ENCODE measurements at regions of chr20 and their contacts with region 1.

Region 1: GRCh38 chr20:34579191-34579978 is 20.9 kb downstream of the MAP1LC3A start:
- DNase-seq: peak; percentile 94
- H3K4me3 ChIP-seq: no peak overlapping the region
- H3K27ac ChIP-seq: peak overlapping the region; percentile 10
- H3K4me1 ChIP-seq: peaks cover 30% of the 10 kb centered on the region
- H3K27me3 ChIP-seq: no peaks in the 10 kb centered on the region
- CTCF ChIP-seq: peak; percentile 92

Region 2: DNA sequence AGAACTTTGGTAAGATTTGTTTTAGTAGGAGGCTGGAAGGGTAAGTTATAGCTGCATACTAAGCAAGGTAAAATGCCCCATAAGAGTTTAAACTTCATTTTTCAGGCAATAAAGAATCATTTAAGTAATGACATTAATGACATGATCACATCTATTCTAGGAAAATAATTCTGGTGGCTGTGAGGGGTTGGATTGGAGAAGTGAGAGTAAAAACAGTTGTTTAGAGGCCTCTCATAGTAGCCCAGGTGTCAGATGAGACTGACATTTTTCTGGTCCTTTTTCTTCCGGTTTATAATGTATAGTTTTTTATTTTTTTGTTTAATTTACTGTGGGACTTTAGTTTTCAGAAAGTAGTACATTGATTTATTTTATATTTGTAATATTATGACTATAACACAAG is 175.5 kb before region 1 on chr20:
- CTCF ChIA-PET with region 1: no interaction called
- dilution Hi-C with region 1: no loop called
- in situ Hi-C with region 1: no loop called
- intact Hi-C with region 1: no loop called
- DNase-seq: no peak
- H3K4me3 ChIP-seq: no peak overlapping the region
- H3K27ac ChIP-seq: no peak overlapping the region
- H3K4me1 ChIP-seq: peaks cover 26% of the 10 kb centered on the region
- H3K27me3 ChIP-seq: no peaks in the 10 kb centered on the region
- CTCF ChIP-seq: no peak

Region 3: GRCh38 chr20:34676642-34677373 is 97.4 kb after region 1 on chr20 and contains the start of gene PIGU:
- CTCF ChIA-PET with region 1: no interaction called
- dilution Hi-C with region 1: no loop called
- in situ Hi-C with region 1: no loop called
- intact Hi-C with region 1: loop called (anchors 1 kb)
- DNase-seq: peak; percentile 96
- H3K4me3 ChIP-seq: peak within 1 kb of the TSS; percentile 88 to 96 (median 92)
- H3K27ac ChIP-seq: peak within 1 kb of the TSS; percentile 36
- H3K4me1 ChIP-seq: peaks cover 6% of the 10 kb centered on the region
- H3K27me3 ChIP-seq: no peaks in the 10 kb centered on the region
- CTCF ChIP-seq: peak in 1 of 2 donors; percentile 23
- total RNA-seq, gene PIGU: 10.5 to 15.2 TPM

Region 4: DNA sequence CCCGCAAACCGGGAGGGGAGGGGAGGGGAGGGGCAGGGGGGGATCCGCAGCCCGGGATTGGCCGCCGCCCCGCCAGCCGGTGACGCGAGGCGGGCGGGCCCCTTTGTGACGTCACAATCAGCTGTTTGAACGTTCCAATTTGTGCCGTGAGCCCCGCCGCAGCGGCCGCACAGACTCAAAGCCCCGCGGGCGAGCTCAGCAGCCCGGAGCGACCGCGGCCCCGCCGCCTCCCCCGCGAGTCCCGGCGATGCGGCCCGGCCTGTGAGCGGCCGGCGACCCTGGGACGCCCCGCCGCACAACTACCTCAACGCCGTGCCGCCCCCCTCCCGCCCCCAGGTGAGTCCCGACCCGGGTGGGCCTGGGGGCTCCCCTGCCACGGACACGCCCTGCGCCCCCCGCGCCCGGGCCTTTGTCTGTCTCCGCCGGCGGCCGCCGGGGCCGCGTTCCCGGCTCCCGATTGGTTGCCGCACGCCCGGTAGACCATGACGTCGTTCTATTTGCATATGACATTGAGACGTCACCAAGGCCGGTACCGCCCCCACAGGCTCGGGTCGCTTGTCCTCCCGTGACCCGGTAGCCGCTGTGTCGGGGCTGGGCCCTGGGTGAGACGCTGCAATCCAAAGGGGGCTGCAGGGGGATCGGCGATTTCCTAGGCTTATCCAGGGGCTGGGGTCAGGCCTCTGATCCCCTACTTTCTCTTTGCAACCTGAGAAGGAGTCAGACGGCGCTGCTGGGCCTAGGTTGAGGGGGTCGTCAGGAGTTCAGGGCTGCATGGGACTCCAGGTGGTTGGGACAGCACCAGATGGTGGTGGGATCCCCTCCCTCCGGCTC is 125.0 kb after region 1 on chr20 and contains the start of gene TP53INP2:
- CTCF ChIA-PET with region 1: interaction called, 4 read pairs
- dilution Hi-C with region 1: no loop called
- in situ Hi-C with region 1: loop called in 1 of 2 experiments (anchors 10 kb)
- intact Hi-C with region 1: loop called (anchors 1 kb)
- DNase-seq: peak; percentile 69
- H3K4me3 ChIP-seq: peak within 1 kb of the TSS; percentile 49 to 78 (median 61)
- H3K27ac ChIP-seq: peak within 1 kb of the TSS; percentile 52
- H3K4me1 ChIP-seq: peaks cover 35% of the 10 kb centered on the region
- H3K27me3 ChIP-seq: no peaks in the 10 kb centered on the region
- CTCF ChIP-seq: no peak
- total RNA-seq, gene TP53INP2: 2.5 to 4.4 TPM

Region 5: DNA sequence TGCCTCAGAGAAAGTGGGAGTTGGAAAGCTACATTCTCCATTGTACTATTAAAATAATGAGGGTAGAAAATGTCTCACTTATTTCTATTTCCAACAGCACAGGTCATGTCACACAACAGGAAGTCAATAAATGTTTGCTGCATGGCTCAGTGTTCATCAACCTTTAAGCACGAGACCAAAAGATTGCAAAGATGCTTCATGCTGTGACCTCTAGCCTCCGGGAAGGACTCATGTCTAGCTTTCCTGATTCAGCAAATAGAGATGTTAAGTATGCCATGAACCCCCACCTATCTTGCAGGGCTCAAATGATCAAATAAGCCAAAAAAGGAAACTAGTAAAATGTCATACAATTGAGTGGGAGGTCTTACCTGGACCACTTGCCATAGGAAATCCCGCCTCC is 188.7 kb after region 1 on chr20:
- CTCF ChIA-PET with region 1: interaction called, 8 read pairs
- dilution Hi-C with region 1: no loop called
- in situ Hi-C with region 1: loop called in 1 of 2 experiments (anchors 10 kb)
- intact Hi-C with region 1: loop called (anchors 1 kb)
- DNase-seq: no peak
- H3K4me3 ChIP-seq: no peak overlapping the region
- H3K27ac ChIP-seq: no peak overlapping the region
- H3K4me1 ChIP-seq: no peaks in the 10 kb centered on the region
- H3K27me3 ChIP-seq: no peaks in the 10 kb centered on the region
- CTCF ChIP-seq: no peak

Region 6: DNA sequence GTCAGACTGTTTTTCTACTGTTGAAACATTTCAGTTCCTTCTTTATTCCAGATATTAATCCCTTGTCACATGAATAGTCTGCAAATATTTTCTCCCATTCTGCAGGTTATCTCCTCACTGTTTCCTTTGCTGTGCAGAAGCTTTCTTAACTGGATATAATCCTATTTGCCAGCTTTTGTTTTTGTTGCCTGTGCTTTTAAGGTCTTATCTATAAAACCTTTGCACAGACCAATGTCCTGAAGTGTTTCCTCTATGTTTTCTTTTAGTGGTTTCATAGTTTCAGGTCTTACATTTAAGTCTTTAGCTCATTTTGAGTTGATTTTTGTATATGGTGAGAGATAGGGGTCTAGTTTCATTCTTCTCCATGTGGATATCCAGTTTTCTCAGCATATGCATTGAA is 226.9 kb after region 1 on chr20:
- CTCF ChIA-PET with region 1: interaction called, 11 read pairs
- dilution Hi-C with region 1: no loop called
- in situ Hi-C with region 1: no loop called
- intact Hi-C with region 1: no loop called
- DNase-seq: no peak
- H3K4me3 ChIP-seq: no peak overlapping the region
- H3K27ac ChIP-seq: no peak overlapping the region
- H3K4me1 ChIP-seq: no peaks in the 10 kb centered on the region
- H3K27me3 ChIP-seq: no peaks in the 10 kb centered on the region
- CTCF ChIP-seq: no peak

Region 7: DNA sequence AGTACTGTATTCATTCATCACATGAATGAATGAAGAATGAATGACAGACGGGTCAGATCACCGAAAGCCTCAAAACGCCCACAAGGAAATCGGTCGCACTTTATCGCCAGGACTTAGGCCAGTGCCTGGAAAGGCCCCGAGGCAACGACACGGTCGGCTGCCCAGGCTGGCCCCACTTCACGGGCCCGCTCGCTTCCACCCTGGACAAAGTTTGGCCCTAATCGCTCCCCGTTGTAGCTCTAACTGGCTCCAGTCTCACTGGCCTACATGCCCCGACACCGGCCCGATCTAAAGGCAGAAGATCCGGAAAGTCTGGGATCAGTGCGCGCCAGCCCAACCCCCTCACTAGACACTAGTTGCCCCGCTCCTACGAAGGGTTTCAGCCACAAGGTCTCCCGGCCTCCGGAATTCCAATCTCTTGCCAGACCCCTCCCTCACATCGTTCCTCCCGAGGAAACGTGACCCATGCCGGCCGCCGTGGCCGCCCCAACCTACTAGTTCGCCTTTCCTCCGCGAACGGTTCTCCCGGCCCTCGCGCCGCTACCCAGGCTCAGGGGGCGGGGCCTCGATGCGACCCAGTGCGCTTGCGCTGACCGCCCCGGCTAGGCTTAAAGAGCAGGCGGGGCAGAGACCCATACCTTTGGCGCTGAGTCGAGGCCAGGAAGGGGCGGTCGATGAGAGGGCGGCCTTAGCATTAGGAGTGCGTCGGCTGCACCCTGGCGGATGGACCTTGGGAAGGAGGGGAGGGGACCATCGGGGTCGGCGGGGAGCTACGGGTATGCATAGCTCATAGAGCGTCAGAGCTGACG is 376.1 kb after region 1 on chr20 and contains the starts of genes GSS and MYH7B:
- CTCF ChIA-PET with region 1: no interaction called
- dilution Hi-C with region 1: no loop called
- in situ Hi-C with region 1: no loop called
- intact Hi-C with region 1: loop called (anchors 2 kb)
- DNase-seq: peak; percentile 95
- H3K4me3 ChIP-seq: peak within 1 kb of the TSS; percentile 68 to 83 (median 79)
- H3K27ac ChIP-seq: peak within 1 kb of the TSS; percentile 76
- H3K4me1 ChIP-seq: peaks cover 6% of the 10 kb centered on the region
- H3K27me3 ChIP-seq: no peaks in the 10 kb centered on the region
- CTCF ChIP-seq: peak; percentile 6 to 66
- total RNA-seq, gene GSS: 102 to 115 TPM
- total RNA-seq, gene MYH7B: under 0.01 to 0.28 TPM